ENCODE measurements at regions of chr18 and their contacts with region 1.

Region 1: GRCh38 chr18:42298759-42299675 is 344.0 kb downstream of the PIK3C3 start:
- DNase-seq: peak; percentile 82 to 97 (median 90)
- H3K4me3 ChIP-seq: peak overlapping the region; percentile 15 to 69 (median 50)
- H3K27ac ChIP-seq: peak overlapping the region in 57 of 59 donors; percentile 3 to 96 (median 78)
- H3K27me3 ChIP-seq: no peaks in the 10 kb centered on the region
- CTCF ChIP-seq: peak; percentile 80 to 99 (median 94)

Region 2: GRCh38 chr18:42351455-42351854 is 52.4 kb after region 1 on chr18:
- intact Hi-C with region 1: no loop called
- DNase-seq: no peak
- H3K4me3 ChIP-seq: no peak overlapping the region
- H3K27ac ChIP-seq: no peak overlapping the region
- H3K27me3 ChIP-seq: no peaks in the 10 kb centered on the region
- CTCF ChIP-seq: no peak

Region 3: DNA sequence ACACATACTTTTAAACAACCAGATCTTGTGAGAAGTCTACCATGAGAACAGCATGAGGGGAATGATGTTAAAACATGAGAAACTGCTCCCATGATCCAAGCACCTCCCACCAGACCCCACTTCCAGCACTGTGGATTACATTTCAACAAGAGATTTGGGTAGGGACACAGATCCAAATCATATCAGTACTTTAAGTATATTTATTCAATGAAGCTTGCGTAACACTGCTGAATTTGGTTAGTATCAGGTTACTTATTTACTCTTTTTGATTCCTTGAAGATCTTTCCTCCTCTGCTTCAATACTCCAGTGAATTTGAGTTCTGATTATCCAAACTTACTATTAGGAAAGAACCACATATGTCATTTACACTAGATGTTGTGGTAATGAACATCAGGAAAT is 74.6 kb after region 1 on chr18:
- intact Hi-C with region 1: no loop called
- DNase-seq: no peak
- H3K4me3 ChIP-seq: no peak overlapping the region
- H3K27ac ChIP-seq: no peak overlapping the region
- H3K27me3 ChIP-seq: no peaks in the 10 kb centered on the region
- CTCF ChIP-seq: no peak

Region 4: GRCh38 chr18:43271593-43272432 is 972.8 kb after region 1 on chr18:
- intact Hi-C with region 1: loop called (anchors 5 kb)
- DNase-seq: peak in 1 of 10 donors; percentile 33
- H3K4me3 ChIP-seq: peak overlapping the region in 20 of 59 donors; percentile 4 to 68 (median 34)
- H3K27ac ChIP-seq: no peak overlapping the region
- H3K27me3 ChIP-seq: peaks cover 0 to 25% (median 0%) of the 10 kb centered on the region in 45 donors
- CTCF ChIP-seq: peak; percentile 74 to 95 (median 87)

Region 5: DNA sequence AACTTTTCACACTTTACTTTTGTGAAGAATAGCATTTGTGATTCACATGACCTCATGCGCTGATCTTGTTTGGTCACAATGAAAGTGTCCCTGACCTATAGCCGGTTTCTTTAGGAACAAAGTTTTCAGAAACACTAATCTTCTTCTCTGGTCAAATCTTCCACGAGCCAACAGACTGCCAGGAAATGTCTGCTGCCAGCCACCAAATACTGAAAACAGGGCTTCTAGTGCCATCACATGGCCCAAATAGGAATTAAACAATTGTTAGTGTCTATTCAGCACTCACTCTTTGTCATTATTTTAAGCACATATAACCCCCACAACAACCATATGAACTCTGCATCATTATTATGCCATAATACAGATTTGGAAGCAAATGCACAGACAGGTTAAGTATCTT is 1264.8 kb after region 1 on chr18:
- intact Hi-C with region 1: loop called in 1 of 2 experiments (anchors 10 kb)
- DNase-seq: peak in 2 of 10 donors; percentile 31 to 52
- H3K4me3 ChIP-seq: no peak overlapping the region
- H3K27ac ChIP-seq: no peak overlapping the region
- H3K27me3 ChIP-seq: peaks cover 0 to 7% (median 0%) of the 10 kb centered on the region in 45 donors
- CTCF ChIP-seq: peak in 55 of 56 donors; percentile 18 to 78 (median 59)

Region 6: DNA sequence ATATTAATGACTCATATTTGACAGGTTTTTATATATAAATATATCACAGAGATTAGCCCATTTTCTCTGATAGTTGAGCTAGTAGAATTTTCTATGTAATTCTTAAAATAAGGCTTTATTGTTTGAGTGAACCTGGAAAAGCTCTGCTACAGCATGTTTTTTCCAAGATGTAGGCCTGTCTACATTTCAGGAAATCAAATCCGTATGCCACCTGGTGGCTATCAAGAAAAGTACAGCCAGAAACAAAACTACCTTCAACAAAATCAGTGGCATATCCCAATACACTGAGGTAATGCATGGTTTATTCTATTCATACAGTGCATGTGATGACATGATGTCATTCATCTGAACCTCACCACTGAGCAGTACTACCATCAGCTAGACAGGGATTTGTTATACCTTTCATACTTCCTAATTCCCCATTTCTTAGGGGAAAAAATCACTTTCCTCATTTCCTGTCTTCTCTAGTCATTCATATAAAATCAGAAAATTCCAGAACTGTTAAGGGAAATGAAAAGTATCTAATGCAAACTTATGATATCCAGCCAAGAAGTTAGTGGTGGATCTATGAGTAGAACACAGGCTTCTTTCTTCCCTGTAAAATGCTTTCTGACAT is 1288.6 kb after region 1 on chr18:
- intact Hi-C with region 1: loop called (anchors 10 kb)
- DNase-seq: peak in 1 of 10 donors; percentile 35
- H3K4me3 ChIP-seq: no peak overlapping the region
- H3K27ac ChIP-seq: no peak overlapping the region
- H3K27me3 ChIP-seq: no peaks in the 10 kb centered on the region
- CTCF ChIP-seq: peak; percentile 68 to 97 (median 83)

Region 7: GRCh38 chr18:43596105-43596712 is 1297.2 kb after region 1 on chr18:
- intact Hi-C with region 1: loop called in 1 of 2 experiments (anchors 10 kb)
- DNase-seq: no peak
- H3K4me3 ChIP-seq: no peak overlapping the region
- H3K27ac ChIP-seq: no peak overlapping the region
- H3K27me3 ChIP-seq: no peaks in the 10 kb centered on the region
- CTCF ChIP-seq: peak; percentile 18 to 77 (median 61)